Activated CD4-positive, alpha-beta T cell treated with anti-CD3 and anti-CD28 coated beads for 36 hours (primary cell): ENCODE measurements at regions of chr9 and their contacts with region 1.

Region 1: DNA sequence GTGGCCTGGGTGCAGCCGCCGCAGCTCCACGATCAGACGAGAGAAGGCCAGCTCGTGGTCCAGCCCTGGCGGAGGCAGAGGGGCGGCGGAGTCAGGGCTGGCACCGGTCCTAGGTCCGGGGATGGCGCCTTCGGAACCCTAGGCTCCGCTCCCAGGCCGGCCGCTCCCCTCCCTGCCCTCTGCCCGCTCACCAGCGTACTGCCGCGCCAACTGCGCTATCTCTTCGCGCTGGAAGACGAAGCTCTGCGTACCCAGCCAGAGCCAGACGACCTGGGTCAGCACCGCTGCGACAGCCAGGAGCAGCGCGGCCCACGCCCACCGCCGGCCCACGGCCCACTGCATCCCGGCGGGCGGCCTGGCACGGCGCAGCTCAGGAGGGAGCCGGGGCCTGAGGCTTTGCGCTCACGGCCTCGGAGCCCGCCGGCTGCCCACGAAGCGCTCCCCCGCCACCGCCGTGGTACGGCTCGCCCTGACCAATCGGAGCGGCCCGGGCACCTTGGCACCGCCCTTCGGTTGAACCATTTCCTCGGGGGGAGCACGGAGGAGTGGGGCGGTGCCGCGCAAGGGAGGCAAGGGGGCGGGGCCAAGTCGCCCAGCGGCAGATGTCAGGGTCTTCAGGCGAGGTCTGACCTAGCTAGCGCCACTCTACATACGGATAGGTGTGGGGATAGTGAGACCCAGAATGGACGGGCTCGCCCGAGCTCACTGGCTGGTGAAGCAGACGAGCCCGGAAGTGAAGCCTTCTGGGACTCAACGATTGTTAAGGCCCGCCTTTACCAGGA is at the start of gene SIGMAR1:
- DNase-seq: peak; percentile 96
- ATAC-seq: peak; percentile 94
- H3K4me3 Mint-ChIP-seq: peak within 1 kb of the TSS; percentile 84
- H3K27ac Mint-ChIP-seq: peak within 1 kb of the TSS; percentile 92
- H3K4me1 Mint-ChIP-seq: peaks cover 40% of the 10 kb centered on the region
- H3K27me3 Mint-ChIP-seq: no peaks in the 10 kb centered on the region
- total RNA-seq, gene SIGMAR1: 63.6 to 68.0 TPM

Region 2: GRCh38 chr9:34522971-34523797 is 114.4 kb before region 1 on chr9 and contains the start of gene ENHO:
- CTCF ChIA-PET with region 1: interaction called, 3 read pairs
- POLR2A ChIA-PET with region 1: interaction called, 3 read pairs
- intact Hi-C with region 1: loop called in 1 of 2 experiments (anchors 1 kb)
- DNase-seq: peak; percentile 93
- ATAC-seq: peak; percentile 99
- H3K4me3 Mint-ChIP-seq: peak within 1 kb of the TSS; percentile 54
- H3K27ac Mint-ChIP-seq: no peak within 1 kb of the TSS
- H3K4me1 Mint-ChIP-seq: peaks cover 24% of the 10 kb centered on the region
- H3K27me3 Mint-ChIP-seq: peaks cover 11% of the 10 kb centered on the region
- total RNA-seq, gene ENHO: not detected

Region 3: DNA sequence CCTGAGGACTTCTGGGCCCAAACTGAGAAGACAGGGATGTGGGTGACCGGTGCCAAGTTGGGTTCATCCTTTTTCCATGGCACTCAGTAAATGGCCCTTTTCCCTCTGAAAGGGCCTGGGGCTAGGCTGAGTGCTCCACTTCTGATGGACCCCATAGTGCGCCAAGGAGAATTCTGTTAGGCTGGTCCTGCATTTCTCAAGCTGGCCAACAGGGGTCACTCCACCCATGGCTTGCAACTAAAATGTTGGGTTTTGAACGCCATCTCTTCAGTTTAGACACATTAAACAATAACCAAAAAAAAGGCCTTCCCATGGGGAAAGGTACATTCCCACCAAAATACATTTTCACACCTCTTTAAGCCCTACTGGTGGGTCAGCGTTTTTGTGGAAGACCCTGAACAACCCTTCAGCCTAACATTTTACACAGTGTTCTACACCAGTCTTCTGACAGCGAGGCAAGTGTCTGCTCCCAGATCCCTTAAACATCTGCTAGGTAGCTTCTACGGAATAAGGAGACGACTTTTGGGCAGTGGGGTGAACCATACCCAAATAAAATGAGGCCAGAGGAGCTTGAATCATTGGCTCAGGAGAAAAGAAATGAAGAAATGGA is 75.3 kb before region 1 on chr9:
- CTCF ChIA-PET with region 1: interaction called, 13 read pairs
- POLR2A ChIA-PET with region 1: no interaction called
- intact Hi-C with region 1: no loop called
- DNase-seq: peak; percentile 69
- ATAC-seq: no peak
- H3K4me3 Mint-ChIP-seq: no peak overlapping the region
- H3K27ac Mint-ChIP-seq: no peak overlapping the region
- H3K4me1 Mint-ChIP-seq: no peaks in the 10 kb centered on the region
- H3K27me3 Mint-ChIP-seq: peaks cover 25% of the 10 kb centered on the region

Region 4: DNA sequence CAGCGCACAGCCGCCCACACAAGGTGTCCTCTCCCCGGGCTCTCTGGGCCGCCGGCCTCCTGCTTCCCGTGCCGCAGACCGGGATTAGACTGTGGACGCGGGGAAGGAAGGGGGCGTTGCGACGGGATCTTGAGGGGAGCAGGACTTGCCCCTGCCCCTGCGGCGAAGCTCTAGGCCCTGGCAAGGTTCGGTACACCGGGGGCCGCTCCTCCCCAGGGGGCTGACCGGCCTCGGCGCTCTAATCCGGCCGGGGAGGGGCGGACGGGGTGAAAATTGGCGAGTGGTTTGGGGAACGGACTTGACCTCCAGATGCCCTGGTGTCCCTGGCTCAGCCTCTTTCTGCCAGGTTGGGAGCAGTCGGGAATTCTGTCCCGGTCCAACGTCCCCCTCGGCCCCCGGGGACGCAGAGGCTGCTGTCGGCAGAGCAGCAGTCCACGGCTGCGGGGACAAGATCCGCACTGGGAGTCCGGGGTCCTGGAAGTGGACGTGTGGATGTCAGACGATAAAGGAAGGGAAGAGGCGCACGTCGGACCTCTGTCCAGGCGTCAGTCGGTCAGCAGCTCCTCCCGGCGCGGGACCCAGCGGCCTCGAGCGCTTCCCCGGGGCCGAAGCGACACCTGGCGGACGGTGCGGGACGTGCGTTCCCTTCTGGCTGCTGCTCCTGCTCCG is 46.2 kb before region 1 on chr9:
- CTCF ChIA-PET with region 1: interaction called, 14 read pairs
- POLR2A ChIA-PET with region 1: no interaction called
- intact Hi-C with region 1: no loop called
- DNase-seq: peak; percentile 89
- ATAC-seq: peak; percentile 76
- H3K4me3 Mint-ChIP-seq: peak overlapping the region; percentile 57
- H3K27ac Mint-ChIP-seq: no peak overlapping the region
- H3K4me1 Mint-ChIP-seq: peaks cover 27% of the 10 kb centered on the region
- H3K27me3 Mint-ChIP-seq: peaks cover 66% of the 10 kb centered on the region

Region 5: GRCh38 chr9:34611829-34612630 is 25.5 kb before region 1 on chr9 and contains the start of gene RPP25L:
- CTCF ChIA-PET with region 1: interaction called, 27 read pairs
- POLR2A ChIA-PET with region 1: interaction called, 3 read pairs
- intact Hi-C with region 1: loop called (anchors 1 kb)
- DNase-seq: peak; percentile 91
- ATAC-seq: peak; percentile 97
- H3K4me3 Mint-ChIP-seq: peak within 1 kb of the TSS; percentile 86
- H3K27ac Mint-ChIP-seq: peak within 1 kb of the TSS; percentile 93
- H3K4me1 Mint-ChIP-seq: peaks cover 16% of the 10 kb centered on the region
- H3K27me3 Mint-ChIP-seq: no peaks in the 10 kb centered on the region
- total RNA-seq, gene RPP25L: 29.3 to 35.2 TPM

Region 6: GRCh38 chr9:34620061-34620994 is 17.2 kb before region 1 on chr9 and contains the start of gene DCTN3:
- CTCF ChIA-PET with region 1: interaction called, 47 read pairs
- POLR2A ChIA-PET with region 1: interaction called, 5 read pairs
- intact Hi-C with region 1: loop called (anchors 1 kb)
- DNase-seq: peak; percentile 95
- ATAC-seq: peak; percentile 99
- H3K4me3 Mint-ChIP-seq: peak within 1 kb of the TSS; percentile 88
- H3K27ac Mint-ChIP-seq: peak within 1 kb of the TSS; percentile 77
- H3K4me1 Mint-ChIP-seq: peaks cover 25% of the 10 kb centered on the region
- H3K27me3 Mint-ChIP-seq: peaks cover 25% of the 10 kb centered on the region
- total RNA-seq, gene DCTN3: 65.9 to 68.4 TPM

Region 7: GRCh38 chr9:34665381-34666250 is 28.1 kb after region 1 on chr9:
- CTCF ChIA-PET with region 1: interaction called, 7 read pairs
- POLR2A ChIA-PET with region 1: interaction called, 3 read pairs
- intact Hi-C with region 1: loop called in 1 of 2 experiments (anchors 1 kb)
- DNase-seq: peak; percentile 93
- ATAC-seq: peak; percentile 75
- H3K4me3 Mint-ChIP-seq: peak overlapping the region; percentile 77
- H3K27ac Mint-ChIP-seq: peak overlapping the region; percentile 87
- H3K4me1 Mint-ChIP-seq: peaks cover 33% of the 10 kb centered on the region
- H3K27me3 Mint-ChIP-seq: no peaks in the 10 kb centered on the region

Region 8: DNA sequence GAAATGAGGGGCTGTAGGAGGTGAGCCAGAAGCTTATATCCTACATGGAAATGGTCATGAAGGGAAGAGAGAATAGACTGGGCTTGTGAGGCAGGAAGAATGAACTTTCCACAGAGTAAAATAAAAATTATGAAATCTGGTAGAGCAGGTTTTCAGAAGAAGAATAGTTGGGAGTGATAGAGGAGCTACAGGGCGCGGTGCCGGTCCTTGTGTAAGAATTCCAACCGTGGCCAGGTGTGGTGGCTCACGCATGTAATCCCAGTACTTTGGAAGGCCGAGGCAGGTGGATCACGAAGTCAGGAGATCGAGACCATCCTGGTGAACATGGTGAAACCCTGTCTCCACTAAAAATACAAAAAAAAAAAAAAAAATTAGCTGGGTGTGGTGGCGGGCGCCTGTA is 515.4 kb after region 1 on chr9:
- CTCF ChIA-PET with region 1: no interaction called
- POLR2A ChIA-PET with region 1: no interaction called
- intact Hi-C with region 1: no loop called
- DNase-seq: no peak
- ATAC-seq: no peak
- H3K4me3 Mint-ChIP-seq: no peak overlapping the region
- H3K27ac Mint-ChIP-seq: no peak overlapping the region
- H3K4me1 Mint-ChIP-seq: no peaks in the 10 kb centered on the region
- H3K27me3 Mint-ChIP-seq: no peaks in the 10 kb centered on the region